Activated CD8-positive, alpha-beta T cell treated with anti-CD3 and anti-CD28 coated beads, Interleukin-2, amount 10 ng/mL, durations not matched to agents 7 days and 5 days (primary cell): ENCODE measurements at regions of chr11 and their contacts with region 1.

Region 1: GRCh38 chr11:60831143-60831500 is 10.8 kb upstream of the CCDC86 start:
- DNase-seq: peak; percentile 88
- ATAC-seq: peak; percentile 97
- H3K4me3 Mint-ChIP-seq: no peak overlapping the region
- H3K27ac Mint-ChIP-seq: no peak overlapping the region
- H3K4me1 Mint-ChIP-seq: peaks cover 22% of the 10 kb centered on the region
- H3K27me3 Mint-ChIP-seq: peaks cover 14% of the 10 kb centered on the region

Region 2: DNA sequence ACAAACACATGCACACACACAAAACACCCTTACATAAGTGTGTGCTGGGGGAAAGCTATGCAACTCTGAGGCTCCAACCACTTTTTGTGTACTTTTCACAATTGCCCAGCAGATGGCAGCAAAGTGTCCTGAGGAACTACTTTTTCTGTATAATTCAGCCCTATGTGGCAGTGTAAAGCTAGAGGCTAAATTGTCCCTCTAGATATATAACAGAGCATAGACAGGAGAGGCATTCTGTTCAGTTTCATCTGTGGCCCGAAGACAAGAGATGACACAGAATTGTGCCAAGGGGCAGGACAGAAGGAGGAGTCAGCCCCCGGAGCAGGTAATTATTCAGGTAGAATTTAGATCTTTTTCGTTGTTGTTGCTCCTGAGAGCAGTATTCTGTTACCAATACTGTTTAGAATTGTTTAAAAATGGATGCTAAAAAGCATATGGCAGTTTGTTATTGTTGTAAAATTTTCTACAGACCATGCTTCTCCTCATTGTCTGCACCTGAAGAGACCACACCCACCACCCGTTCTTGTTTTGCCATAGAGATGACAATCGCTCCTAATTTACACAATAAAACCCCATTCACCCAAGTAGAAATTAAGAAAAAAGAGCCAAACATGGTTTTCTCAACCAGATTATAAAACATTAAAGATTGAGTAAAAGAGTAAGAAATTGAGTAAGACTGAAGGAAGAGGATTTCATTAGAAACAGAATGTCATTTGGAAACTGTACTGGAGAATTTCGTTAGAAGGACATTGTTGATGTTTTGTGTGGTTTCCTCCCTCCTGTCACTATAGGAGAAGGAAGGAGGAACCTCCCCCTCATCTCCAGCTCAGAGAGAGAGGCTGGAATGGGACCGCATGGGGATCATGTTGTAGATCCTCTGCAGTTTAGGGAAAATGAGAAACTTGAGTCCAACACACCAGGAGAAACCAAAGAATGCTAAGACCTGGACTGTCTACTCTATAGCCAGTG is 467.3 kb before region 1 on chr11:
- CTCF ChIA-PET with region 1: no interaction called
- POLR2A ChIA-PET with region 1: no interaction called
- DNase-seq: peak; percentile 73
- ATAC-seq: peak; percentile 65
- H3K4me3 Mint-ChIP-seq: no peak overlapping the region
- H3K27ac Mint-ChIP-seq: no peak overlapping the region
- H3K4me1 Mint-ChIP-seq: no peaks in the 10 kb centered on the region
- H3K27me3 Mint-ChIP-seq: peaks cover 14% of the 10 kb centered on the region

Region 3: DNA sequence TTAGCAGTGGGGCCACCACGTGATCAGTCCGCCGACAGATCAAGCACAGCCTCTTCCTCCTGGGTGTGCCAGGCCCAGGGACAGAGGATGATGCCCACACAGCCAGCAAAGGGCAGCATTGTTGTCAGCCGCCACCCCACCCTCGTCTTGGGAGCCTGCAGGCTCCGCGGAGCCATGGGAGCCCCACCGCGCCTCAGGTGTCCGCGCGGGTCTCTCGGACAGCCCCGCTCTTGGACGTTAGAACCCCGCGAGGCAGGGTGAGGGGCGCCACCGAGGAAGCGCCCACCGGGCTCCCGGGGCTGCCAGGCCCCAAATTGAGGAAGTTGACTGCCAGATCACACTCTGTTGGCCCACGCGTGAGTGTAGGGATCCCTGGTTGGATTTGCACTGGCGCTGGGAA is 215.6 kb before region 1 on chr11:
- CTCF ChIA-PET with region 1: no interaction called
- POLR2A ChIA-PET with region 1: no interaction called
- DNase-seq: no peak
- ATAC-seq: no peak
- H3K4me3 Mint-ChIP-seq: no peak overlapping the region
- H3K27ac Mint-ChIP-seq: no peak overlapping the region
- H3K4me1 Mint-ChIP-seq: no peaks in the 10 kb centered on the region
- H3K27me3 Mint-ChIP-seq: peaks cover 14% of the 10 kb centered on the region

Region 4: DNA sequence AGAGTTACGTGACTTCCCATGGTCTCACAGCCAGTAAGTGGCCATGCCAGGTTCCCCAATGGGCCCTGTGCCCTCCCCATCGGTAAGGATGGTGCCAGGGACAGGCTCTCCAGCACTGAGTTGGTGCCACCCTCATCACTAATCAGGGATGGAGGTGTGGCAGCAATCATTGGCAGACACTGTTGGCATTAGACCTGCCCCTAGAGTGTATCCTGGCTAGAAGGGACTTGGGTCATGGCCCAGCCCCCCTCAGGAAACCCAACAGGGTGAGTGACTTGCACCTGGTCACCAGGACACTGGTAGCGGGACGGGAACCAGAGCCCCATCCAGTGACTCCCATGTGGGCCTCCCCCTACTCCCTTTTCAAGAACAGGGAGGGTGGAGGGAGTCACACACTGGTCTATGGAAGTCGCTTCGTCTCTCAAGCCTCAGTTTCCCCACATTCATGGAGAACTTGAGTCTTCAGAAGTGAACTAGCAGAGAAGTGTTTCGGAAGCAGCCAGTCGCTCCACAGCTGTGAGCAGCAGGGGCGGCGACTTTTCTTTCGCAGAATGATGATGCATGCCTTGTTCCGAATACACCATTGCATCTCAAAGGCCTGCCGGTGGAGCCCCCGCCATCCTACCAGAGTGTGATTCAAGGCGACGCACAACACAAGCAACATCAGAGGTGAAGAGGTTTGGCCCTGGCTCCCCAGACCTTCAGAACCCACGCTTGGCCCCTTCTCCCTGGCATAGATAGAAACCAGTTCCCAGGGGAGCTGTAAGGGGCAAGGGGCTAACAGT is 33.1 kb before region 1 on chr11:
- CTCF ChIA-PET with region 1: no interaction called
- POLR2A ChIA-PET with region 1: no interaction called
- DNase-seq: no peak
- ATAC-seq: no peak
- H3K4me3 Mint-ChIP-seq: no peak overlapping the region
- H3K27ac Mint-ChIP-seq: no peak overlapping the region
- H3K4me1 Mint-ChIP-seq: no peaks in the 10 kb centered on the region
- H3K27me3 Mint-ChIP-seq: peaks cover 7% of the 10 kb centered on the region

Region 5: GRCh38 chr11:60841797-60842667 is 10.9 kb after region 1 on chr11 and contains the start of gene CCDC86:
- CTCF ChIA-PET with region 1: interaction called, 11 read pairs
- POLR2A ChIA-PET with region 1: no interaction called
- DNase-seq: peak; percentile 98
- ATAC-seq: peak; percentile 93
- H3K4me3 Mint-ChIP-seq: peak within 1 kb of the TSS; percentile 90
- H3K27ac Mint-ChIP-seq: peak within 1 kb of the TSS; percentile 92
- H3K4me1 Mint-ChIP-seq: peaks cover 50% of the 10 kb centered on the region
- H3K27me3 Mint-ChIP-seq: no peaks in the 10 kb centered on the region
- total RNA-seq, gene CCDC86: 34.2 to 36.0 TPM

Region 6: GRCh38 chr11:60855726-60856633 is 24.9 kb after region 1 on chr11 and contains the start of gene PTGDR2:
- CTCF ChIA-PET with region 1: interaction called, 22 read pairs
- POLR2A ChIA-PET with region 1: no interaction called
- DNase-seq: peak; percentile 51
- ATAC-seq: peak; percentile 46
- H3K4me3 Mint-ChIP-seq: peak within 1 kb of the TSS; percentile 63
- H3K27ac Mint-ChIP-seq: peak within 1 kb of the TSS; percentile 83
- H3K4me1 Mint-ChIP-seq: peaks cover 63% of the 10 kb centered on the region
- H3K27me3 Mint-ChIP-seq: no peaks in the 10 kb centered on the region
- total RNA-seq, gene PTGDR2: 3.3 to 3.4 TPM

Region 7: DNA sequence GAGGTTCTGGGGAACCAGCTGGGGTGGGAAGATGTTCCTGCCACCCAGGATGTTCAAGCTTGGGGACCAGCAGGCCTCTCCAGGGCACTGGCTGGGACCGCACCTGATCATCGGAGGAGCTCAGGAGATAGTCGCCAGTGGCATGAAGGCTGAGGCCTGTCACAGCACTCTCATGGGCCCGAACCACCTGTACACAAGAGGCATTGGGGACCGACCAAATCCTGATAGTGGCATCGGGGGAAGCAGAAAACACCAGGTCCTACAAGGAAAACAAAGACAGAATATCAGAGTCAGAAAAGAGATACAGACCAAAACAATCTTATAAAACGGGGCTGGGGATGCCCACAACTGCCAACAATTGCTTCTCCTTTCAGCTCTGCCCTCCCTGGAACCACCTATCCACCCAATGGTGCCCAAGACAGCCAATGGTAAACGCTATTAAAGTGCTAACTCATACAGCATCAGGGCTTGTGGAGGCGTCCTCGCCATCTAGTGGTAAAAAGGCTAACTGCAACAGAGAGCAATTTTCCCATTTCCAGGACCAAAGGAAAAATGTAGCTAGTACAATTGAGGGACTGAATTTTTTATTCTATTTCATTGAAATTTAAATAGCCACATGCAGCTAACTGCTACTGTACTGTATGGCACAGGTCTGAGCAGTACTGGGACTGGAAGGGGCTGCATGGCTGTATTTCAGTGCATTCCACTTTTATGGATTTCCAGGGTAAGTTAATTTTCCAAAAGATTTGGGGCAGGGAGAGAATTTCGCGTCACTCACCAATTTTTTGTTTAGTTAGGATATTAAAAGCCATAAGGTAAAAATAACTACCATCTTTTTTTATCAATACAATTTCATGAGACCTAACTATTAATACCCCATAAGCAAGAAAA is 68.2 kb after region 1 on chr11:
- CTCF ChIA-PET with region 1: interaction called, 187 read pairs
- POLR2A ChIA-PET with region 1: no interaction called
- DNase-seq: peak; percentile 50
- ATAC-seq: peak; percentile 73
- H3K4me3 Mint-ChIP-seq: no peak overlapping the region
- H3K27ac Mint-ChIP-seq: no peak overlapping the region
- H3K4me1 Mint-ChIP-seq: peaks cover 19% of the 10 kb centered on the region
- H3K27me3 Mint-ChIP-seq: no peaks in the 10 kb centered on the region

Region 8: DNA sequence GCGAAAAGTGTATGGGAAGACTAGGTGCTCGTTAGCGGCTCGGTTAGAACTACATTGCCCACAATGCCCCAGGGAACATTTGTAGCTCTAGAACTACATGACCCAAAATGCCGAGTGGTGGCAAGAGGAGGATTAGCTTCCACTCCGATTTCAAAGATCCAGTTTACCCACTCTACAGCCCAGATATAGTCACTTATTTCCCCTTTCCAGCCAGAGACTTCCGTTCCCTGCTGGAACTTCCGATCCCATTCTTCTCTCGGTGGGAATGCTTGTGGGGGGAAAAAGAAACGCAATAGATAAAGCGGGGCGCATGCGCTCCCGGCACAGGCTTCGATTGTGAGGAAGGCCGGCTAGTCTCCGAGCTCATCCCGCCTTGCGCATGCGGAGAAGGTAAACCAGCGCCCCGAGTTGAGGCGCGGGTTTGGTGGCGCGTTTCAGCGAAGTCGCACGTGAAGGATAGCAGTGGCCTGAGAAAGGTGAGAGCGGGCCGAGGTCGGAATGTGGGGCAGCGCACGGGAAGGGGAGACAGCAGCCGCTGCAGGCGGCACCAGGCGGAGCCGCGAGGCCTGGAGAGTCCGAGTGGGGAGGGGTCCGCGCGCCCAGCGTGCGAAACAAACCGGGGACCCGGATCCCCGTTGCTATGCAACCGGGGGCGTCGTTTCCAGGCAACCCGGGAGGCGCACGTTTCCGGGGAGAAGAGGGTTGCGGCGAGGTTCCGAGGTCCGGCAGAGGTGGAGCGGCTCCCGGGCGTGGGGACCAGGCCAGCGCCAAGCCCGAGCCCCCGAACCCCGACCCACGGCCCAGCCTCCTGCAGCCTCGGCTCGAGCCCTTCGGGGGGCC is 82.9 kb after region 1 on chr11 and contains the start of gene TMEM109:
- CTCF ChIA-PET with region 1: interaction called, 31 read pairs
- POLR2A ChIA-PET with region 1: no interaction called
- DNase-seq: peak; percentile 92
- ATAC-seq: peak; percentile 77
- H3K4me3 Mint-ChIP-seq: peak within 1 kb of the TSS; percentile 93
- H3K27ac Mint-ChIP-seq: peak within 1 kb of the TSS; percentile 96
- H3K4me1 Mint-ChIP-seq: peaks cover 49% of the 10 kb centered on the region
- H3K27me3 Mint-ChIP-seq: peaks cover 2% of the 10 kb centered on the region
- total RNA-seq, gene TMEM109: 136 to 139 TPM